Dendritic cell treated with granulocyte-macrophage colony-stimulating factor and Interleukin-4, amounts not matched to agents 40 ng/mL and 50 ng/mL, for 4 days (primary cell): ENCODE measurements at regions of chr2 and their contacts with region 1.

Region 1: DNA sequence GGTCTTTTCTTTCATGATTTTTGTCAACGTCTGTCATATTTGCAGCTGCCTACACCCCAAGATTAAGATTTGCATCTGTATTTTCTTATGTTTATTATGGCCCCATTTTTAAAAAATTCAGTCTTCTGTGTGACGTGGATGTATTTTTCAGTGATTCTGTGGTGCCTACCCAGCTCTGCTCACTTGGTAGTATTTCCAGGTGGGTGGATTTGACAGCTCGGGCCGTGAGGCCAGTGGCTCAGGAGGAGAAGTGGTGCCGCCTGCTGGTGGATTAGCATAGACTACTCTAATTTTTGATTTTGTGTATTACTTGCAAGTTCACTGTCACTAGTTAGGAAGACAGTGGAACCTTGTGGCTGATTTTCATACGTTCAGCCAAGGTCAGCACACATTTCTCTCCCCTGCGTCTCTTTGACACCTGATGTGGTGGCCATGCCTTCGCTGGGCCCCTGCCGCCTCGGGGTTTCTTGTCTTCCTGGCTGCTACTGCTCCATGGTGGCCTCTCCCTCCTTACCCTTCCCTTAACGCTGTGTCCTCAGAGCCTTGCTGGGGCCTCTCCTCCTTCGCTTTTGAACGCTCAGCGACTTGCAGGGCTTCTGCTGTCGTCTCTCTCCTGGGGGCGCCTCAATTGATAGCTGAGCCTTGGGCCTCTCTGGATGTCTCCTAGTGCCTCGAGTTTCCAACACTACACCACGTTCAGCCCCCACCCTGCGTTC is 89.3 kb downstream of the DGKD start:
- H3K4me3 Mint-ChIP-seq: no peak overlapping the region
- H3K27ac Mint-ChIP-seq: no peak overlapping the region
- H3K4me1 Mint-ChIP-seq: no peaks in the 10 kb centered on the region
- H3K27me3 Mint-ChIP-seq: no peaks in the 10 kb centered on the region

Region 2: GRCh38 chr2:233275223-233275622 is 168.4 kb before region 1 on chr2:
- intact Hi-C with region 1: loop called (anchors 5 kb)
- H3K4me3 Mint-ChIP-seq: no peak overlapping the region
- H3K27ac Mint-ChIP-seq: no peak overlapping the region
- H3K4me1 Mint-ChIP-seq: peaks cover 3% of the 10 kb centered on the region
- H3K27me3 Mint-ChIP-seq: no peaks in the 10 kb centered on the region

Region 3: GRCh38 chr2:233288719-233289118 is 154.9 kb before region 1 on chr2:
- intact Hi-C with region 1: loop called (anchors 5 kb)
- H3K4me3 Mint-ChIP-seq: no peak overlapping the region
- H3K27ac Mint-ChIP-seq: no peak overlapping the region
- H3K4me1 Mint-ChIP-seq: no peaks in the 10 kb centered on the region
- H3K27me3 Mint-ChIP-seq: no peaks in the 10 kb centered on the region

Region 4: DNA sequence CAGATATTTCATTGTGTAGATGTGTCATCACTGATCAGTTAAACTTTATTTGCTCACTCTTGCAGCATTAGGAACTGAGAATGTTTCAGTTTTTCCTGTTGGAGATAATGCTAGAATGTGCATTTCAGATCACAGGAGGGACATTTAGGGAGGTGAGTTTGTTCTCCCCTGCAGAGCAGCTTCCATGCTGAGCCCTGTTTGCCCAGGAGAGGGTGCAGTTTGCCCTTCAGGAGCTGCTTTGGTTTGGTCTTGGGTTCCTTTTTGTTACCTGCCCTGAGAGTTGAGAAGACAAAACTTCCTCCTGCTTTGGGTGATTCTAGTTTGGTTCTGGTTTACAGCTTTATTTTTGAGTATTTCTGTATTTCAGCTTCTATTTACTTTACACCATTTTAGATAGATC is 39.4 kb before region 1 on chr2:
- intact Hi-C with region 1: loop called (anchors 5 kb)
- H3K4me3 Mint-ChIP-seq: no peak overlapping the region
- H3K27ac Mint-ChIP-seq: peak overlapping the region; percentile 11
- H3K4me1 Mint-ChIP-seq: peaks cover 21% of the 10 kb centered on the region
- H3K27me3 Mint-ChIP-seq: no peaks in the 10 kb centered on the region